ENCODE measurements at regions of chr1 and their contacts with region 1.

Region 1: GRCh38 chr1:48236716-48237470 is 14.4 kb downstream of the SLC5A9 start:
- DNase-seq: peak in 1 of 2 experiments; percentile 17
- H3K4me3 ChIP-seq: no peak overlapping the region
- H3K4me1 ChIP-seq: no peaks in the 10 kb centered on the region
- H3K27me3 ChIP-seq: no peaks in the 10 kb centered on the region

Region 2: DNA sequence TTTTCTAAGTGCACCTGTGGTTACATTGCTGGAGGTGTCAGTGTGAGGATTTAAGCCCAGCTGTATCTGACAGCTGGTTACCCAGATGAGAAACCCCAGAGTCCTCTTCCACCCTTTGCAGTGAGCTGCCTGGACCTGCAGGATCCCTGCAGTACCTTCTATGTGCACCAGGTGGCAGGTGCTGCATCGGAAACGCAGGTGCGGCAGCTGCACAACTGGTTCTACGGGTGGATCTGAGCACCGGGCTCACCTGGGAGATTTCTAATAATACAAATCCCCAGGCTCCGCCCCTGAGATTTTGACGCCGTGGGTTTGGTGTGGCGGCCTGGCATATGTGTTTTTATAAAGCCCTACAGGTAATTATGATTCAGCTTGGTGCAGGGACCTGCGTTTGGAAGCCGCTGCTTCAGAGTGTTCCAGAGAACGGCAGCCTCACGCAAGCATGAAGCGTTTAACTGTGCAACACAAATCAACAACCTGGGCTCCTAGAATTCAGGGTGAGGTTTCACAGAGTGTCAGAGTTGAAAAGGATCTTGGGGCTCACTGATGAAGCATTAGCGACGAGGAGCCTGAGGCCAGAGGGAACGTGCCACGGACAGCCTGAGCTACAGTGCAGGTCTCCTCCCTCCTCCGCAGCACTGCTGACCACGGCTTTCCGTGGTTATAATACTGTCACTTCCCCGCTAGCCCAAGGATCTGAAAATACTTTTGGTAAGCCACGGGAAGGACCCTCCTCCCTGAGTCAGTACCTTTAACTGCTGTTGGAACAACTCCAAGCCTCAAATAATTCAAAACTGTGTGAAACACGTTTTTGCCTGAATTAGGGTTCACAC is 143.0 kb before region 1 on chr1:
- in situ Hi-C with region 1: loop called (anchors 10 kb)
- DNase-seq: peak; percentile 38 to 79
- H3K4me3 ChIP-seq: no peak overlapping the region
- H3K4me1 ChIP-seq: no peaks in the 10 kb centered on the region
- H3K27me3 ChIP-seq: no peaks in the 10 kb centered on the region

Measured in HAP-1 (cell line).